PC-9 (cell line): ENCODE measurements at regions of chr9 and their contacts with region 1.

Region 1: GRCh38 chr9:38362852-38363593 is 29.5 kb upstream of the ALDH1B1 start:
- DNase-seq: peak; percentile 28 to 57
- H3K4me3 ChIP-seq: no peak overlapping the region
- H3K27ac ChIP-seq: no peak overlapping the region
- H3K4me1 ChIP-seq: no peaks in the 10 kb centered on the region
- H3K27me3 ChIP-seq: no peaks in the 10 kb centered on the region
- CTCF ChIP-seq: peak; percentile 71

Region 2: GRCh38 chr9:37746848-37747753 is 615.9 kb before region 1 on chr9:
- CTCF ChIA-PET with region 1: no interaction called
- POLR2A ChIA-PET with region 1: no interaction called
- intact Hi-C with region 1: loop called (anchors 5 kb)
- DNase-seq: peak; percentile 41 to 44
- H3K4me3 ChIP-seq: no peak overlapping the region
- H3K27ac ChIP-seq: no peak overlapping the region
- H3K4me1 ChIP-seq: no peaks in the 10 kb centered on the region
- H3K27me3 ChIP-seq: no peaks in the 10 kb centered on the region
- CTCF ChIP-seq: peak; percentile 79

Region 3: DNA sequence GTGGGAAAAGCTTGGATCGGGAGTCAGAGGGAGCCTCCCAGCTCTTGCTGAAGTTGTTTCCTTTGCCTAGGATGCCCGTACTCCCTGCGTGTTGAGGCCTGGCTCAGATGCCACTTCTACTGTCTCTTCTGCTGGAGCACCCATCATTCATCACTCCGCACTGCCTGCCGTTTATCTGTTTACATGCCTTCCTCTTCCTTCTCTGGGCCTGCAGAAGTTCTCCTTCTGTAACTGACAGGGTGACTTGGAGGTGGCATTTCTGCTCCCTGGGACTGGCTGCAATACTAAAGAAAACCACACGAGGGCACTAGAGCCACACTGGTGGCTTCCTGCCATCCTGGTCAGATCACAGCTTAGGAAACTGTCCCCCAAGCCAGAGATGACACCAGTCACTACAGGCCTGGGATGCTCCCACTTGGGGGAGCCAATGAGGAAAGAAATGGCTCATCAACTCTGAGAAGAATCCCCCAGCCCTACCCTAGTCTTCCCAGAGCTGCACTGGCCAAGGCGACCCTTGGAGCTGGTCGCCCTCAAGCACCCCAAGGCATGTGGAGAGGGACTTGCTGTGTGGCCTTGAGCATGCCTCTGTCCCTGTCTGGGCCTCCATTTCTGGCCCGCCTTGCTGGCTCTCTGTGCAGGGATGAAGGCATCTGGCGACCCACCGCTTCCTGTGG is 449.4 kb before region 1 on chr9:
- CTCF ChIA-PET with region 1: no interaction called
- POLR2A ChIA-PET with region 1: no interaction called
- intact Hi-C with region 1: loop called (anchors 1 kb)
- DNase-seq: peak; percentile 50 to 77
- H3K4me3 ChIP-seq: no peak overlapping the region
- H3K27ac ChIP-seq: no peak overlapping the region
- H3K4me1 ChIP-seq: peaks cover 13% of the 10 kb centered on the region
- H3K27me3 ChIP-seq: no peaks in the 10 kb centered on the region
- CTCF ChIP-seq: peak; percentile 90

Region 4: GRCh38 chr9:38068866-38069629 is 294.0 kb before region 1 on chr9 and contains the start of gene SHB:
- CTCF ChIA-PET with region 1: no interaction called
- POLR2A ChIA-PET with region 1: no interaction called
- intact Hi-C with region 1: loop called (anchors 5 kb)
- DNase-seq: peak in 1 of 2 experiments; percentile 74
- H3K4me3 ChIP-seq: peak within 1 kb of the TSS; percentile 90
- H3K27ac ChIP-seq: peak within 1 kb of the TSS; percentile 91
- H3K4me1 ChIP-seq: peaks cover 43% of the 10 kb centered on the region
- H3K27me3 ChIP-seq: no peaks in the 10 kb centered on the region
- CTCF ChIP-seq: no peak; the same call in 1 of the 2 replicates
- total RNA-seq, gene SHB: 22.7 and 23.8 TPM in 2 replicates

Region 5: GRCh38 chr9:38088006-38088925 is 274.8 kb before region 1 on chr9:
- CTCF ChIA-PET with region 1: no interaction called
- POLR2A ChIA-PET with region 1: no interaction called
- intact Hi-C with region 1: loop called (anchors 5 kb)
- DNase-seq: peak in 1 of 2 experiments; percentile 49
- H3K4me3 ChIP-seq: no peak overlapping the region
- H3K27ac ChIP-seq: no peak overlapping the region
- H3K4me1 ChIP-seq: peaks cover 22% of the 10 kb centered on the region
- H3K27me3 ChIP-seq: no peaks in the 10 kb centered on the region
- CTCF ChIP-seq: peak; percentile 93

Region 6: DNA sequence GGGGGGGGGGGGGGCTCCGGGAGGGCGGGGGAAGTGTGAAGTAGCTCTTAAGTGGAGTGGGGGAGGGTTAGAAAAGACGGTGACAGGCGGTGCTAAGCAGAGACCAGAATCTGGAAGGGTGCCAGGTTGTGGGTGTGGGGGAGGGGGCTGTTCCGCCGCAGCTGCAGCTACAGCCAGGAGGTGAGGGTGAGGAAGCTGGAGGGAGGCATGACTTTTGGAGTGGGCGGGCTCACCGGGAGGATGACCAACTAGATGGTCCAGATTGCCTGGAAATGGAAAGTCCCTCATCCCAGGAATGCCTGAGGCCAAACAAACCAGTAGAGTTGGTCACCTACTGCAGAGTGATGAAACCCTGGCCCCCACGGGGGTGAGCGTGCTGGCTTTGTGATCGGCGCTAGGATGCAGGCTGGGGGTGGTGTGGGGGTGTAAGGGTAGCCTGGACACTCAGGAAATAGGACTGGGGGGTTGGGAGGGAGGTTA is 135.9 kb before region 1 on chr9:
- CTCF ChIA-PET with region 1: no interaction called
- POLR2A ChIA-PET with region 1: no interaction called
- intact Hi-C with region 1: loop called (anchors 2 kb)
- DNase-seq: peak; percentile 92 to 96
- H3K4me3 ChIP-seq: peak overlapping the region; percentile 24; the same call in 1 of the 2 replicates
- H3K27ac ChIP-seq: peak overlapping the region; percentile 90
- H3K4me1 ChIP-seq: peaks cover 30% of the 10 kb centered on the region
- H3K27me3 ChIP-seq: no peaks in the 10 kb centered on the region
- CTCF ChIP-seq: no peak